Left ventricle myocardium superior (tissue), 1 donor: ENCODE measurements at regions of chr15 and their contacts with region 1.

Region 1: DNA sequence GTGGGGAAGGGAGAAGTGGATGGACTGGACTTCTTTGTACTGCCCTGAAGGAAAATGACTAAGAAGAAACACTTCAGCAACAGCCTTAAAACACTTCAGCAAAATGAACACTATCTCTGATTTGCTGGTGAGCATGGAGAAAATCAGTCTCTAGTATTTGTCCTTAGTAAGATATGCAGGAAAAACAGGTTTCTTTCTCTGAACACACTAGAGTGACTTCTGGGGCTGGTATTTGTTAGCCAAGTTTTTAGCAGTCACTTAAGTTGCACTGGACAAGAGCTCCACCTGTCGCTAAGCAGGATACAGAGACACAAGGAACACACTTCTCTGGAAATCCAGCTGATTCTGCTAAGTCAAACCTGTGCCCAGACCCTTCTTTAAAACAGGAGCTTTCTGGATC is 65.2 kb downstream of the CHAC1 start:
- DNase-seq: no peak
- ATAC-seq: peak; percentile 62

Region 2: DNA sequence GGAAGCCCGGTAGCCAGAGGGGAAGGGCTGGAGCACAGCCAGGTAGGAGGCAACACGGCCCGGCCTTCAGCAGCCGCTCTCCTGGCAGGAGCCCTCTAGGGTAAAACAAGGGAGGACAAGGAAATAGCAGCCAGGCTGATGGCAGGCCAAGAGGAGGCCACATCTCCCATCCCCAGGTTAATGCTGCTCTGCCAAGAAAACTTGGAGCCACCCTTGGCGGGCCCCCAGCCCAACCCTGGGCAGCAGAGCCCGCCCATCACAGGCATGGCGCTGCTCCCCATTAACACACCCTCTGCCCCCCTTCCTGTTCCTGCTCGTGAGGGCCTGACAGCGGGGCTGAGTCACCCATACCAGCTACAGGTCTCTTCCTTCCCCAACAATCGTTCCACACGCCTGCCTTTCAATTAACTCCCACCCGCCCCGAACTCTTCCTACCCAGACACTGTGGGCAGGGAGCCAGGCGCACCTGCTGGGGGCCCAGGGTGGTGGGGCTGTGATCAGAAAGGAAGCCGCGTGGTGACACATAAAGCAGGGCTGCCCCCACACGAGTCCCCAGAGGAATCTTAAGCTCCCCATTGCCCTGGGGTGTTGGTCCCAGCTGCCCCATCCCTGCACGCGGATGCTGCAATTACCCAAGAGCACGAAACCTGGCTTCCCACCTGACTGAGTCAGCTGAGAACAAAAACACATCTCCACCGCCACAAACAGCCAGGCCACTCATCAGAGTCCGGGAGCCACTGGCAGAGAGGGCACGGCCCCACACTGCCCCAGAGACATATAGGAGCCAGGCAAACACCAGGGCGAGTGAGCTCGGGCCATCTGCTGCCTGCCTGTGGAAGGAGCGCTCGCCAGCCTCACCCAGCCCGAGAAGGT is 249.0 kb before region 1 on chr15 and contains the start of gene C15orf62:
- intact Hi-C with region 1: no loop called
- DNase-seq: no peak
- ATAC-seq: no peak
- total RNA-seq, gene C15orf62: not detected

Region 3: GRCh38 chr15:40904552-40905201 is 113.8 kb before region 1 on chr15:
- intact Hi-C with region 1: loop called (anchors 2 kb)
- DNase-seq: no peak
- ATAC-seq: no peak

Region 4: GRCh38 chr15:41150279-41150678 is 131.8 kb after region 1 on chr15:
- intact Hi-C with region 1: no loop called
- DNase-seq: no peak
- ATAC-seq: no peak